H1 (cell line): ENCODE measurements at regions of chr19 and their contacts with region 1.

Region 1: DNA sequence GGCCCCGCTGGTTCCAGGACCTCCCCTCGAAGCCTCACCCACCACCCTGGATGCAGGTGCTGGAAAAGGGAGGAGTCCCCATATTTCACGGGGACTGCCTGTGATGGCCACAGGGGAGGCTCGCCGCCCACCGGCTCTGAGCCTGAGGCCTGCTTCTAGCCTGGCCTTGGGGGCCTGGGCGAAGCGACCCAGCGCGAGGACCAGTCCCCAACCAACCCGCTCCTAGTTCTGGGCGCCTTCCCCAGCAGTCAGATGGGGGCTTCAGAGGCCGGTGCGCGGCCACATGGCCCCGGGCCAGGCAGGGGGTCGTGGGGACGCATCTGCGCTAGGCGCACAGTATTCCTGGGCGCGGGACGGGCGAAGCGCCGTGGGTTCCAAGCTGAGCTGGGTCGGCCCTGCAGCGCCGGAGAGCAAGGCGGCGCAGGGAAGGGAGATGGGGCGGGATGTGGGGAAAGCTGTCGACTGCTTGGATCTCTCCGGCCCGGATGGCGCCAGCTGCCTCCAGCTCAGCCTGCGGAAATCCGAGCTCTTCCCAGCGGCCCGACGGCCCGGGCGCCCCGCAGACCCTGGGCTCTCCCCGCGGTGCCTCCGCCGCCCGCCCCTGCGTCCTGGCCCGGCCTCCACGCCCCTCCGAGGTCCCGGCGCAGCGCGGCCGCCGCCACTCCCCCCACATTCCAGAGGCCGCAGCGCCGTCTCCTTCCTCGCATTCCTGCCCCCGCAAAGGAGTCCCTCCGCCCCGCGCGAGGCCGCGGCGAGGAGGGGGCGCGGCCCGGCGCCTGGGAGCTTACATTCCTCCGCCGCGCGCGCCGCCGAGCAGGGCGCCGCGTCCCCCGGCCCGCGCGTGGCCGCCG is at the start of gene WTIP:
- DNase-seq: peak in 1 of 2 experiments; percentile 88
- H3K4me3 ChIP-seq: peak within 1 kb of the TSS; percentile 61 to 84 (median 71)
- H3K27ac ChIP-seq: 0 out of 2 replicates have a peak within 1 kb of the TSS, but pooled peaks have one; percentile 4
- H3K4me1 ChIP-seq: peaks cover 0 to 18% (median 13%) of the 10 kb centered on the region in 4 experiments; a peak in 6 of 7 replicates
- H3K27me3 ChIP-seq: peaks cover 0 to 23% (median 16%) of the 10 kb centered on the region in 4 experiments; a peak in 6 of 7 replicates
- CTCF ChIP-seq: no peak
- EP300 ChIP-seq: peak in 1 of 2 experiments; percentile 74; a peak in 1 of 3 replicates
- POLR2A ChIP-seq: peak; percentile 71 to 83
- RAD21 ChIP-seq: no peak
- total RNA-seq, gene WTIP: 15.4 and 20.3 TPM in 2 replicates

Region 2: DNA sequence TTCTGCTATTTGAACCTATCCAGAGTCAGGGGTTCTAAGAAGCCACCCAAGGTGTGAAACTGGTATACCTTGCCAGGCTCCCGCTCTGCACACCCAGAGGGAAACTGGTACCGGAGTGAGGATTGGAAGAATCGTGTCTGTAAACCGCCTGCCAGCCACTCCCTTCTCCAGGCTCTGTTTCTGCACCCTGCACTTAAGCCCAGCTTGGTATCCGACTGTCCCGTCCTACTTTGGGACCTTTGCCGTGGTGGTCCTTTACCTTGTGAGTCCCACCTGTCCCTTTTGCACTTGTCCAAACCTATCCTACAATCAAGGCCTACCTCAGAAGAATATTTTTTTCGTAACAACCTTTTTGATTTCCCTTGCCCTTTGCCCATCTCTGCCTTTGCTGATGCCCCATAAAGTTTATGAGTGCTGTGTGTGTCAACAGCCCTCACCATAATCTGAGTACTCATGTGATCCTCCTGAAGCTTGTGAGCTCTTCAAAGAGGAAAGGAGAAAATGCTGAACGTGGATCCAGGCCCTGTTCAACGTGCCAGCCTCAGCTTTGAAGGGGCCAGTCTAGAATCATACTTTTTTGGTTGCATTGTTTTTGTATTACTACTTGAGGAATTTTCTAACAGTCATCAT is 182.2 kb before region 1 on chr19:
- CTCF ChIA-PET with region 1: no interaction called
- POLR2A ChIA-PET with region 1: no interaction called
- DNase-seq: no peak
- H3K4me3 ChIP-seq: no peak overlapping the region
- H3K27ac ChIP-seq: no peak overlapping the region
- H3K4me1 ChIP-seq: no peaks in the 10 kb centered on the region
- H3K27me3 ChIP-seq: no peaks in the 10 kb centered on the region
- CTCF ChIP-seq: no peak
- EP300 ChIP-seq: no peak
- POLR2A ChIP-seq: no peak
- RAD21 ChIP-seq: no peak

Region 3: GRCh38 chr19:34501339-34502320 is 20.4 kb after region 1 on chr19:
- CTCF ChIA-PET with region 1: interaction called, 14 read pairs
- POLR2A ChIA-PET with region 1: interaction called, 63 read pairs
- DNase-seq: peak; percentile 88 to 100
- H3K4me3 ChIP-seq: no peak overlapping the region; a peak in 1 of 8 replicates
- H3K27ac ChIP-seq: no peak overlapping the region
- H3K4me1 ChIP-seq: peaks cover 0 to 8% (median 7%) of the 10 kb centered on the region in 4 experiments; a peak in 5 of 7 replicates
- H3K27me3 ChIP-seq: no peaks in the 10 kb centered on the region
- CTCF ChIP-seq: peak; percentile 98 to 100 (median 98)
- EP300 ChIP-seq: no peak
- POLR2A ChIP-seq: no peak
- RAD21 ChIP-seq: peak; percentile 90 to 94